Heart left ventricle (tissue), 16 donors: ENCODE measurements at regions of chr3 and their contacts with region 1.

Region 1: GRCh38 chr3:160343132-160343531 is 55.9 kb downstream of the IFT80 start:
- DNase-seq: no peak
- ATAC-seq: no peak
- H3K4me3 ChIP-seq: no peak overlapping the region
- H3K27ac ChIP-seq: no peak overlapping the region
- H3K4me1 ChIP-seq: peaks cover 0 to 4% (median 0%) of the 10 kb centered on the region in 12 donors
- H3K27me3 ChIP-seq: no peaks in the 10 kb centered on the region
- CTCF ChIP-seq: peak; percentile 19 to 58 (median 42)
- POLR2A ChIP-seq: no peak

Region 2: GRCh38 chr3:160027541-160028195 is 315.5 kb before region 1 on chr3:
- intact Hi-C with region 1: loop called in 9 of 10 experiments (anchors 2 to 10 kb)
- DNase-seq: no peak
- ATAC-seq: no peak
- H3K4me3 ChIP-seq: no peak overlapping the region
- H3K27ac ChIP-seq: no peak overlapping the region
- H3K4me1 ChIP-seq: peaks cover 0 to 5% (median 0%) of the 10 kb centered on the region in 12 donors
- H3K27me3 ChIP-seq: no peaks in the 10 kb centered on the region
- CTCF ChIP-seq: no peak
- POLR2A ChIP-seq: no peak

Region 3: GRCh38 chr3:160163229-160163878 is 179.8 kb before region 1 on chr3:
- intact Hi-C with region 1: loop called (anchors 1 to 10 kb)
- DNase-seq: no peak
- ATAC-seq: no peak
- H3K4me3 ChIP-seq: no peak overlapping the region
- H3K27ac ChIP-seq: no peak overlapping the region
- H3K4me1 ChIP-seq: no peaks in the 10 kb centered on the region
- H3K27me3 ChIP-seq: peaks cover 0 to 4% (median 0%) of the 10 kb centered on the region in 9 donors
- CTCF ChIP-seq: peak in 11 of 12 donors; percentile 20 to 63 (median 49)
- POLR2A ChIP-seq: no peak

Region 4: GRCh38 chr3:160169139-160169976 is 173.8 kb before region 1 on chr3:
- intact Hi-C with region 1: loop called in 9 of 10 experiments (anchors 2 to 10 kb)
- DNase-seq: no peak
- ATAC-seq: no peak
- H3K4me3 ChIP-seq: no peak overlapping the region
- H3K27ac ChIP-seq: peak overlapping the region in 1 of 12 donors; percentile 27
- H3K4me1 ChIP-seq: peaks cover 0 to 4% (median 0%) of the 10 kb centered on the region in 12 donors
- H3K27me3 ChIP-seq: no peaks in the 10 kb centered on the region
- CTCF ChIP-seq: no peak
- POLR2A ChIP-seq: no peak